ENCODE measurements at regions of chr2 and their contacts with region 1.

Region 1: DNA sequence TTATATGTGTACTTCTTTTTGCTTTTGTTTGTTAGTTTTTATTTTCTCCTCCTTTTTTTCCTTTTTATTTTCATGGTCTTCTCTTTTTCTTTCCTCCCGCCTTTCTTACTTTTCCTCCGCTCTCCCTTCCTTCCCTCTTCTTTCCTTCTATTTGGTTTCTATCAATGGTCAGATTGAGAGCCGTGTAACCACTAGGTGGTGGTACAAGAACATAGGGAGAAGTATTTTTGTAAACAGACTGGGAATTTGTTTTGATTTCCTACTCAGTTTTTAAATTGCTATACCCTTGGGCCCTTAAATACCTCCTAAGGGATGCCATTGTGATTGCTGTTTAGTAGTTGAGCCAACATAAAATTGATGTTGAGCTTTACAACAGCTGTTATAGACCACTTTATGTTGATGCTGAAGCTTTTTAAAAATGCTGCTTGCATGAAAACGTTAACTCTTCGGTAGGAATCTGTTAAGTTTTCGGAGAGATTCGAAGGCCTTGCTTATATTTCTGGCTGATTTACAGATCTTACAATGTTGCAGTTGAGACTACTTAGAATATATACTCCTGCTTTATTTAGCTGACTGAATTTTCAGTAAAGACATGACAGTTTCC is 124.2 kb downstream of the UBE2E3 start:
- DNase-seq: no peak
- H3K4me3 Mint-ChIP-seq: no peak overlapping the region
- H3K27ac Mint-ChIP-seq: peak overlapping the region; percentile 49
- H3K4me1 Mint-ChIP-seq: peaks cover 50% of the 10 kb centered on the region
- H3K27me3 Mint-ChIP-seq: no peaks in the 10 kb centered on the region

Region 2: GRCh38 chr2:180980106-180980942 is 124.3 kb before region 1 on chr2 and contains the start of gene UBE2E3:
- intact Hi-C with region 1: loop called (anchors 2 kb)
- DNase-seq: peak; percentile 72
- H3K4me3 Mint-ChIP-seq: peak within 1 kb of the TSS; percentile 98
- H3K27ac Mint-ChIP-seq: peak within 1 kb of the TSS; percentile 95
- H3K4me1 Mint-ChIP-seq: peaks cover 45% of the 10 kb centered on the region
- H3K27me3 Mint-ChIP-seq: peaks cover 30% of the 10 kb centered on the region
- total RNA-seq, gene UBE2E3: 49.8 and 57.4 TPM in 2 replicates

Region 3: GRCh38 chr2:181165199-181165868 is 60.7 kb after region 1 on chr2:
- intact Hi-C with region 1: loop called (anchors 1 kb)
- DNase-seq: no peak
- H3K4me3 Mint-ChIP-seq: peak overlapping the region; percentile 67
- H3K27ac Mint-ChIP-seq: peak overlapping the region; percentile 93
- H3K4me1 Mint-ChIP-seq: peaks cover 60% of the 10 kb centered on the region
- H3K27me3 Mint-ChIP-seq: no peaks in the 10 kb centered on the region

Region 4: GRCh38 chr2:181223234-181223633 is 118.6 kb after region 1 on chr2:
- intact Hi-C with region 1: loop called (anchors 1 kb)
- DNase-seq: no peak
- H3K4me3 Mint-ChIP-seq: peak overlapping the region; percentile 34
- H3K27ac Mint-ChIP-seq: peak overlapping the region; percentile 93
- H3K4me1 Mint-ChIP-seq: peaks cover 31% of the 10 kb centered on the region
- H3K27me3 Mint-ChIP-seq: no peaks in the 10 kb centered on the region

Region 5: DNA sequence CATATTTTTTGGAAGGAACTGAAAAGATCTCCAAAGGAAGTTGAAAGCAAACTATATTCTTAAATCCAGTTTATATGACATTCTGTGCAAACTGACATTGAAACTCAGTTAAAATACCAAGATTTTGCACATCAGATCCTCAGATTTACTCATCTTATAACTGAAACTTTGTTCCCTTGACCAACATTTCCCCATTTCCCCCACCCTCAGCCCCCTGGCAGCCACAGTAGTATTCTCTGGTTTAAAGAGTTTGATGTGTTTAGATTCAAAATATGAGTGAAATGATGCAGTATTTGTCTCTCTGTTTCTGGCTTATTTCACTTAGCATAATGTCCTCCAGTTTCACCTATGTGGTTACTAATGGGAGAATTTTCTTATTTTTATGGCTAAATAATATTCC is 253.4 kb after region 1 on chr2:
- intact Hi-C with region 1: loop called (anchors 2 kb)
- DNase-seq: no peak
- H3K4me3 Mint-ChIP-seq: no peak overlapping the region
- H3K27ac Mint-ChIP-seq: no peak overlapping the region
- H3K4me1 Mint-ChIP-seq: peaks cover 18% of the 10 kb centered on the region
- H3K27me3 Mint-ChIP-seq: no peaks in the 10 kb centered on the region

Region 6: GRCh38 chr2:181715033-181715630 is 610.5 kb after region 1 on chr2:
- intact Hi-C with region 1: loop called (anchors 1 kb)
- DNase-seq: peak; percentile 45
- H3K4me3 Mint-ChIP-seq: no peak overlapping the region
- H3K27ac Mint-ChIP-seq: no peak overlapping the region
- H3K4me1 Mint-ChIP-seq: no peaks in the 10 kb centered on the region
- H3K27me3 Mint-ChIP-seq: peaks cover 5% of the 10 kb centered on the region

Measured in activated T-helper 1 cell treated with anti-CD3 and anti-CD28 coated beads, Interleukin-12 subunit alpha, Interleukin-12 subunit beta, Interleukin-2, Interleukin-4 antibody, amounts not matched to agents 30 ng/mL and 10 ng/mL and 1 ng/mL, durations not matched to agents 14 hours and 24 hours and 36 hours (primary cell).